Activated naive CD8-positive, alpha-beta T cell treated with anti-CD3 and anti-CD28 coated beads, Interleukin-2, amount 10 ng/mL, durations not matched to agents 7 days and 5 days (primary cell): ENCODE measurements at regions of chr15 and their contacts with region 1.

Region 1: GRCh38 chr15:59099162-59099685 is 5.7 kb upstream of the CCNB2 start:
- DNase-seq: no peak
- ATAC-seq: peak; percentile 56
- H3K4me3 Mint-ChIP-seq: peak overlapping the region; percentile 84
- H3K27ac Mint-ChIP-seq: peak overlapping the region; percentile 93
- H3K4me1 Mint-ChIP-seq: peaks cover 28% of the 10 kb centered on the region
- H3K27me3 Mint-ChIP-seq: no peaks in the 10 kb centered on the region

Region 2: DNA sequence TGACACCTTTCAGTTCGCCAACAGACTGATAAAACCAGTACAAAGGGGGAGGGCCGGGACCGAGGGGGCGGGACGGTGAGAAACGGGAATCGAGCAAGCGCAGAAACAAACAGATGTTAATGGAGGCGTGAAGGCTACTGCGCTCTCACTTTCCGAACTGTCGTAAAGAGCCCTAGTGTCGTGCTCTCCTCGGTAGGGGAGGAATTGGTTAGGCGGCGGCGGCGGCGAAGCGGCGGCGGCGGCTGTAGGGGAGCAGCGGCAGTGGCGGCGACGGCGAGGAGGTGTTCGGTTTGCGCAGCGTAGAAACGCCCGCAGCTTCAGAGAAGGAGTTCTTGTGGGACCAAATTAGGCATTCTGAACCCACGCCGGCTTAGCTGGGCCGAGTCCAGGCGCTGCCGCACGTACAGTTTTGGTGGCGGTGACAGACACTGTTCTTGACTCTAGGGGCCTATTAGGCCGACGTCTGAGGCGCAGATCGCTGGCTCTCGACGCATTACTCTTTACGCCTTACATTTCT is 111.7 kb before region 1 on chr15 and contains the start of gene RNF111:
- POLR2A ChIA-PET with region 1: no interaction called
- DNase-seq: peak; percentile 84
- ATAC-seq: peak; percentile 87
- H3K4me3 Mint-ChIP-seq: peak within 1 kb of the TSS; percentile 98
- H3K27ac Mint-ChIP-seq: peak within 1 kb of the TSS; percentile 93
- H3K4me1 Mint-ChIP-seq: peaks cover 32% of the 10 kb centered on the region
- H3K27me3 Mint-ChIP-seq: no peaks in the 10 kb centered on the region
- total RNA-seq, gene RNF111: 38.2 to 46.9 TPM

Region 3: GRCh38 chr15:59020322-59020721 is 78.9 kb before region 1 on chr15:
- POLR2A ChIA-PET with region 1: interaction called, 10 read pairs
- DNase-seq: no peak
- ATAC-seq: no peak
- H3K4me3 Mint-ChIP-seq: no peak overlapping the region
- H3K27ac Mint-ChIP-seq: no peak overlapping the region
- H3K4me1 Mint-ChIP-seq: peaks cover 5% of the 10 kb centered on the region
- H3K27me3 Mint-ChIP-seq: no peaks in the 10 kb centered on the region

Region 4: DNA sequence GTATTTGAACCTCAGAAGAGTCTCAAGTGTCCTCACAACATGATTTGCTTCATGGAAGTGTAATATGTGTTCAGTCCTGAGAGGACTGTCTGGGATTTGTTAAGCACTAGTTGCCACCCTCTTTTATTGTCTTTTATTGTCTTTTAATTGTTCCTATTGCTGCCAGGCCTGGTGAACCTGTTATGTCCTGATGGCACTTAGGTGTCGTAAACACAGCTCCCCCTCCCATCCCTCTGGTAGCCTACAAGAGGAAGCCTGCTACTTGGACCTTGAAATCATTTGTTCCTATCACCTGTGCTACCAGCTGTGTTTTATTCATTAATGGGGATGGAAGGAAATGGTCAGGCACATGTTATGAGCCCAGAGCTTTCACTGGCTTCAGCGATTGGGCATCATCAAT is 25.0 kb after region 1 on chr15:
- POLR2A ChIA-PET with region 1: no interaction called
- DNase-seq: no peak
- ATAC-seq: no peak
- H3K4me3 Mint-ChIP-seq: no peak overlapping the region
- H3K27ac Mint-ChIP-seq: no peak overlapping the region
- H3K4me1 Mint-ChIP-seq: peaks cover 14% of the 10 kb centered on the region
- H3K27me3 Mint-ChIP-seq: no peaks in the 10 kb centered on the region

Region 5: DNA sequence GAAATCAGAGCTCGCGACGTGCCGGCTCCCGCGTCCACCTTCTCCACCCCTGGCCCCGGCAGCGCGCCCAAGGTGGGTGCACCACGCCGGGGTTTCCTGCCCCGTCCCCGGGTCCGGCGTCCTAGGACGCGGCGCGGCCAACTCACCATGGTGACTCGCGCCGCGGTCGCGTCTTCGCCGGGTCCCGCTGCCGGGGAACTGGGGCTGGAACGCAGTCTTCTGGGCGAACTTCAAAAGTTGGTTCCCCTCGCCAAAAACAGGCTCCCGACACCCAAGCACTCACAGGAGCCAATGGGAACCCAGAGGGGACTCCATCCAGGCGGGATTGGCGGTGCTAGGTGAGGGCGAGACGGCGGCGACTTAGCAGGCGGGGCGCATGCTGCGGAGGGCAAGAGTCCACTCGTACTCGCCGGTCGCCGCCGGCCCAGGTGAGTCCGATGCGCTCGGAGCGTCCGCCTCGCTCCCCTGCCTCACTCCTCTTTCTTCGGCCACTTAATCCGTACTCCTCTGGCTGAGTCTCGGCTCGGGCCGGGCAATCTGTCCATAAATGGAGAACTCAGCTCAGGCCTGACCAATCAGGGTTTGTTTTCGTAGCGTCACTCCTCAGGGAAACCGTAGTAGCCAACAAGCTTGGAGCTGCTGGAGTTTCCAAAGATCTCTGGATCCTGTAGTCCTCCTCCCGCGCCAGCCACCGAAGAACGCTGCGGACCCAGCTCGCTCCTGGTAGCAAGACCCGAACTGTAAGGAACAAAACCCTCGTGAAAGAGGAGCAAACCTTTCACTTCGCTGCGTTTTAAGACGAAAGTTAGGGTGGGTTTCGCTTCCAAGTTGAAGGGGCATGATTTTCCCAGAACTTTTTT is 273.4 kb after region 1 on chr15 and contains the start of gene MYO1E:
- POLR2A ChIA-PET with region 1: no interaction called
- DNase-seq: peak; percentile 68
- ATAC-seq: peak; percentile 66
- H3K4me3 Mint-ChIP-seq: peak within 1 kb of the TSS; percentile 95
- H3K27ac Mint-ChIP-seq: peak within 1 kb of the TSS; percentile 78
- H3K4me1 Mint-ChIP-seq: peaks cover 45% of the 10 kb centered on the region
- H3K27me3 Mint-ChIP-seq: peaks cover 52% of the 10 kb centered on the region
- total RNA-seq, gene MYO1E: 73.9 to 79.1 TPM